Esophagus muscularis mucosa (tissue), 4 donors: ENCODE measurements at regions of chr17 and their contacts with region 1.

Region 1: DNA sequence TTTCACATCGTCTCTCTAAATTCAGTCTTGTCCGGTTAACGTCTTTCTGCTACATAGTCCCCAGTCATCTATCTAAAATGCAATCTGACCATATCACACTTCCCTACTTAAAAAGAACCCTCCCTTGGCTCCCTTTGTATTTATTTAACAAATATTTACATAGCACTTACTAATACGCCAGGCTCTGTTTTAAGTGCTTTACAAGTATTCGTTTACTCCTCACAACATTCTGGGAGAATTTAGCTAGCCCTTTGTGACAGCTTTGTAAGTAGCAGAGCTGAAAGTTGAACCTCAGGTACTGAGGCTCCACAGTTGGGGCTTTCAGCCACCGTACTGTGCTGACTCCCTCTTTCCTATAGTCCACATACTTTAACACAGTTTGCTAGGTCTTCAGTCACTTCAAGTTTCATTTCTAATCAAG is 9.2 kb downstream of the PAFAH1B1 start:
- DNase-seq: no peak
- H3K4me3 ChIP-seq: no peak overlapping the region
- H3K27ac ChIP-seq: peak overlapping the region in 1 of 4 donors; percentile 27
- H3K4me1 ChIP-seq: peaks cover 59 to 96% (median 94%) of the 10 kb centered on the region in 4 donors
- H3K27me3 ChIP-seq: no peaks in the 10 kb centered on the region
- CTCF ChIP-seq: no peak
- EP300 ChIP-seq: no peak
- POLR2A ChIP-seq: no peak

Region 2: DNA sequence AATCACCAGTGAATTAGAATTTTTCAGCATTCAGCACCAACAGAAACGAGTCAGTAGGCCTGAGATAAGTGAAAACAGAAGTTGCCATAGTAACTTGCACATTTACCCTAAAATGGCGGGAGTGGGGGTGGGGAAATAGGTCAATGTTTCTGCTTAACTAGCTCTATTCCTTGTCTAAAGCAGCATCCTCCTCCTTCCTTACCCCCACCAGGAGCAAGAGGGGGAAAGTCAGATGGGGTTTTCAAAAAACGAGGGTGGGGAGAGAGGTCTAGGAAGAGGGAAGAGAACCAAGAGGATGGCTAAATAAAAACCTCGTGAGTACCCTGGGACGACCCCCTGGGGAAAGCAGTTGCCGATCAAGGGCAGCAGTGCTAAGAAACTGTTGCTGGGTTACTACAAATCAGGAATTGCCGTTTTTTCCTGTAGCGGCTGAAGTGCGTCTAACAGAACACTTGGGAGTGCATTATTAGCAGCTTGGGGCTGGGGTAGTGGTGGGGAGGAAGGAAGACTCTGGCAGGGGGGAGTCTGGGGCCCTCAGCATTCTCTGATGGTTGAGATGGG is 167.3 kb before region 1 on chr17:
- intact Hi-C with region 1: no loop called
- DNase-seq: no peak
- H3K4me3 ChIP-seq: no peak overlapping the region
- H3K27ac ChIP-seq: no peak overlapping the region
- H3K4me1 ChIP-seq: no peaks in the 10 kb centered on the region
- H3K27me3 ChIP-seq: no peaks in the 10 kb centered on the region
- CTCF ChIP-seq: no peak
- EP300 ChIP-seq: no peak
- POLR2A ChIP-seq: no peak

Region 3: GRCh38 chr17:2656283-2656682 is 53.7 kb after region 1 on chr17:
- intact Hi-C with region 1: loop called (anchors 10 kb)
- DNase-seq: no peak
- H3K4me3 ChIP-seq: no peak overlapping the region
- H3K27ac ChIP-seq: no peak overlapping the region
- H3K4me1 ChIP-seq: peaks cover 0 to 33% (median 16%) of the 10 kb centered on the region in 4 donors
- H3K27me3 ChIP-seq: no peaks in the 10 kb centered on the region
- CTCF ChIP-seq: no peak
- EP300 ChIP-seq: no peak
- POLR2A ChIP-seq: no peak